MCF 10A (cell line): ENCODE measurements at regions of chr20 and their contacts with region 1.

Region 1: GRCh38 chr20:1325173-1326030 is 3.5 kb downstream of the SDCBP2 start:
- DNase-seq: peak; percentile 95
- H3K4me3 Mint-ChIP-seq: no peak overlapping the region
- H3K27ac Mint-ChIP-seq: no peak overlapping the region
- H3K4me1 Mint-ChIP-seq: peaks cover 26% of the 10 kb centered on the region
- H3K27me3 Mint-ChIP-seq: no peaks in the 10 kb centered on the region
- CTCF ChIP-seq: no peak

Region 2: GRCh38 chr20:1177680-1178079 is 147.7 kb before region 1 on chr20:
- CTCF ChIA-PET with region 1: no interaction called
- POLR2A ChIA-PET with region 1: no interaction called
- intact Hi-C with region 1: no loop called
- DNase-seq: peak; percentile 15
- H3K4me3 Mint-ChIP-seq: no peak overlapping the region
- H3K27ac Mint-ChIP-seq: peak overlapping the region; percentile 66
- H3K4me1 Mint-ChIP-seq: no peaks in the 10 kb centered on the region
- H3K27me3 Mint-ChIP-seq: peaks cover 5% of the 10 kb centered on the region
- CTCF ChIP-seq: no peak

Region 3: DNA sequence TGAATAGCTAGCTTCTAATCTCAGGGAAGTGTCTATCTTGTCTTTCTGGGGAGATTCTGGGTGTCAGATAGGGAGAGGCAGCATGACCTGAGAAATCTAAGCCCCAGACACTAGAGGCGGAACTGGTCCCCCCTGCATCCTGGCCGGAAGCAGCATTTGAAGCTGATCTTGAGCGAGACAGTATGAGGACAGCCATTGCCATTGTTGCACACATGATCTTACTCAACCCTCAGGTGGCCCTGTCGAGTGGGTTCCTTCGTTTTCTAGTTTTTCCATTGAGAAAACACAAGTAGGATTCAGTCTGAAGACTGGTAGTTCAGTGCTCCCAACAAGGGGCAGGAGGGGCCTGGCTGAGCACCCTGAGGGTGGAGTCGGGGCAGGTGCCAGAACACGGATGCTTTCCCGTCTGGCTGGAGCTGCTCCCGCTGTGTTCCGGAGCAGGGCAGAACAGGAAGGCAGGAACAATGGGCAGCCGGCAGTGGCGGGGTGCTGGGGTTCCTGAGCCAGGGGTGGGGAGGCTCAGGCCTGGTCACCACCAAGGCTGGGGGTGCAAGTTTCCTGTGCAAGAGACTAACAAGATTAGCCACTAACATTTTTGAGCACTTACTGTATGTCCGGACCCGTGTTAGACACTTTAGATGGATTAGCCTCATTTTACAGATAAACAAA is 11.4 kb after region 1 on chr20:
- CTCF ChIA-PET with region 1: interaction called, 4 read pairs
- POLR2A ChIA-PET with region 1: interaction called, 38 read pairs
- intact Hi-C with region 1: no loop called
- DNase-seq: peak; percentile 76
- H3K4me3 Mint-ChIP-seq: no peak overlapping the region
- H3K27ac Mint-ChIP-seq: no peak overlapping the region
- H3K4me1 Mint-ChIP-seq: peaks cover 25% of the 10 kb centered on the region
- H3K27me3 Mint-ChIP-seq: no peaks in the 10 kb centered on the region
- CTCF ChIP-seq: no peak

Region 4: GRCh38 chr20:1401451-1401907 is 76.1 kb after region 1 on chr20:
- CTCF ChIA-PET with region 1: no interaction called
- POLR2A ChIA-PET with region 1: interaction called, 16 read pairs
- intact Hi-C with region 1: no loop called
- DNase-seq: no peak
- H3K4me3 Mint-ChIP-seq: no peak overlapping the region
- H3K27ac Mint-ChIP-seq: no peak overlapping the region
- H3K4me1 Mint-ChIP-seq: peaks cover 17% of the 10 kb centered on the region
- H3K27me3 Mint-ChIP-seq: no peaks in the 10 kb centered on the region
- CTCF ChIP-seq: no peak

Region 5: DNA sequence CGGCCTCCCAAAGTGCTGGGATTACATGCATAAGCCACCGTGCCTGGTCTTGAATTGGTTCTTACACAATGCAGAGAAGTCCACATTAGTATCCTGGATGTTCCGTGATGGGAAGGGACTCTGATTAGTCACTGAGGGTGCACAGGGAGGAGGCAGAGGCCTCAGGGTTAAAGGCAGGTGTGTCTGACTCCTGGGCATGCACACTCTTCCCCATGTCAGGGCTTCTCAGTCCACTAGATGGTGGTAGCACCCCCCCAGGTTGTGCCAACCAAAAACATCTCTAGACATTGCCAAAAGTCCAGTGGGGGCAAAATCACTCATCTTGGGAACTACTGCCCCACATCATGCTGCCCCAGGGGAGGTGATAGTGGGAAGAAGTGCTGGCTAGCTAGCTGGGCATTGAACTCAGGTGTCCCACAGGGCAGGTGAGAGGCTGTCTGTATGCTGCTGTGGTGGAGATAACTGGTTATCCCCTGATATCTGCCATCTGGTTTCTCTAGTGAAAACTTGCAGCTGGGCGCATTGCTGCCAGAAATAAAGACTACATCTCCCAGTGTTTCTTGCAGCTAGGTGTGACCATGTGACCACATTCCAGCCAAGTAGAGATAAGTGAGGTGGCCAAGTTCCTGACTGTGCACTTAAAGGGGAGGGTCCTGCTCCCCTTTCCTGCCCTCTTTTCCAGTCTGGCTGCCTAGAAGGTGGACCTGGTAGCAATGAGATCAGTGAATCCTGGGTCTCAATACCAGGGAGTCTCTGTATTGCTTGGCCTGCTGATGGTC is 149.6 kb after region 1 on chr20:
- CTCF ChIA-PET with region 1: interaction called, 6 read pairs
- POLR2A ChIA-PET with region 1: interaction called, 106 read pairs
- intact Hi-C with region 1: no loop called
- DNase-seq: peak; percentile 92
- H3K4me3 Mint-ChIP-seq: no peak overlapping the region
- H3K27ac Mint-ChIP-seq: peak overlapping the region; percentile 69
- H3K4me1 Mint-ChIP-seq: peaks cover 43% of the 10 kb centered on the region
- H3K27me3 Mint-ChIP-seq: no peaks in the 10 kb centered on the region
- CTCF ChIP-seq: no peak